ENCODE measurements at regions of chr12 and their contacts with region 1.

Region 1: DNA sequence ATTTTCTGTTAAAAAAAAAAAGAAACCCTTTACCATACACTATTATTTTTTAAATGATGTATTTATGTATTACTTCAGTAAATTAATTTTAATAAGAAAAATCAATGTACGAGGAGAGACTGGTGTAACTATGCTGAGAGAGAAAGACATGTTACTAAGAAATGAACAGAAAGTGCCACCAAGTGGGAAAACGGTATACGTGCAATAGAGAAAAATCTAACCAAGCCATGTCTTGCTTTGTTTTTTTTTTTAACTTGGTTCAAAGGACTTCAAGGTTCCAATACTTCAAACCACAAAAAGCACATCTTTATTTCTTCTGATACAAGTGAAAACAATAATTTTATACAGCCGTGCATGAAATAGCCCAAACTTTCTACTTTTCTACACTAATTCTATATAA is 22.9 kb downstream of the NDUFA12 start:
- DNase-seq: no peak
- H3K4me3 Mint-ChIP-seq: no peak overlapping the region
- H3K27ac Mint-ChIP-seq: no peak overlapping the region
- H3K4me1 Mint-ChIP-seq: peaks cover 10% of the 10 kb centered on the region
- H3K27me3 Mint-ChIP-seq: no peaks in the 10 kb centered on the region

Region 2: GRCh38 chr12:94649349-94650142 is 331.0 kb before region 1 on chr12:
- intact Hi-C with region 1: loop called (anchors 10 kb)
- DNase-seq: peak; percentile 21
- H3K4me3 Mint-ChIP-seq: peak overlapping the region; percentile 80
- H3K27ac Mint-ChIP-seq: peak overlapping the region; percentile 18
- H3K4me1 Mint-ChIP-seq: peaks cover 11% of the 10 kb centered on the region
- H3K27me3 Mint-ChIP-seq: peaks cover 73% of the 10 kb centered on the region